Left ventricle myocardium inferior (tissue), 1 donor: ENCODE measurements at regions of chr9 and their contacts with region 1.

Region 1: GRCh38 chr9:11805969-11806368 is 887.2 kb upstream of the TYRP1 start:
- DNase-seq: no peak
- H3K4me3 ChIP-seq: no peak overlapping the region
- H3K27ac ChIP-seq: no peak overlapping the region
- H3K4me1 ChIP-seq: no peaks in the 10 kb centered on the region
- H3K27me3 ChIP-seq: no peaks in the 10 kb centered on the region
- CTCF ChIP-seq: no peak

Region 2: GRCh38 chr9:11709567-11709966 is 96.4 kb before region 1 on chr9:
- intact Hi-C with region 1: no loop called
- DNase-seq: no peak
- H3K4me3 ChIP-seq: no peak overlapping the region
- H3K27ac ChIP-seq: no peak overlapping the region
- H3K4me1 ChIP-seq: no peaks in the 10 kb centered on the region
- H3K27me3 ChIP-seq: no peaks in the 10 kb centered on the region
- CTCF ChIP-seq: no peak

Region 3: DNA sequence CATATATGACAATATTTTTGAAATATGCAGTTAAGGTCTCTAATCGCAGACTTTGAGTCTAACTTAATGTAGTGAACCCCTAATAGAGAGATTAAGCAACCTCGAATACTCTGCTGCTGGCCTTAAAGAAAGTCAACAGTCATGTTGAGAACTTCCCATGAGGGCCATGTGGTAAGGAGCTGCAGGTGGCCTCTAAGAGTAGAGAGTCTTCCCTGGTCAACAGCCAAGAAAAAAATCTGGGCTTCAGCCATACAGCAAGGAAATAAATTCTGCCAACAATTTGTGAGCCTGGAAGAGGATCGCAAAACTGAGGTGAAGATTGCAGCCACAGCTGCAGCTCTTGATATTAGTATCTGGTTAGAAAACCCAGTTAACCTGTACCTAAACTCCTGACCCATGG is 48.0 kb before region 1 on chr9:
- intact Hi-C with region 1: no loop called
- DNase-seq: no peak
- H3K4me3 ChIP-seq: no peak overlapping the region
- H3K27ac ChIP-seq: no peak overlapping the region
- H3K4me1 ChIP-seq: no peaks in the 10 kb centered on the region
- H3K27me3 ChIP-seq: no peaks in the 10 kb centered on the region
- CTCF ChIP-seq: no peak

Region 4: DNA sequence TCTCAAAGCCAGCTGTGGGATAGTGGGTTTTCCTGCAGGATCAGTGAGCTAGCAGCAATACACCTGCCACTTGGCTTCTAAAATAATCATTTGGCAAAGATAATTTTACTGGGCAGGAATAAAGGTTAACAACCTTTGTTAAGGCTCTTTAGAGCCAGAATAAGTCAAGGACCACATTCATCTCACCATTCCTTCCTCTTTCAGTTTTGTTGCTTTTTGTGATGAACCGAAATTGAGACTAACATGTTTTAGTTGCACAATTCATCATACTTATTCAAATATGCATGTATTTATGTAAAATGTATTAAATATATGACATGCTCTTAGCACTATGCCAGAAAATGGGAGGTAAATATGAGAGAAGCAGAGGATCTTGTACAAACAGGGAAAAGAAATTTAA is 62.8 kb after region 1 on chr9:
- intact Hi-C with region 1: loop called (anchors 10 kb)
- DNase-seq: no peak
- H3K4me3 ChIP-seq: no peak overlapping the region
- H3K27ac ChIP-seq: no peak overlapping the region
- H3K4me1 ChIP-seq: no peaks in the 10 kb centered on the region
- H3K27me3 ChIP-seq: no peaks in the 10 kb centered on the region
- CTCF ChIP-seq: no peak

Region 5: GRCh38 chr9:11893331-11893730 is 87.4 kb after region 1 on chr9:
- intact Hi-C with region 1: no loop called
- DNase-seq: no peak
- H3K4me3 ChIP-seq: no peak overlapping the region
- H3K27ac ChIP-seq: no peak overlapping the region
- H3K4me1 ChIP-seq: no peaks in the 10 kb centered on the region
- H3K27me3 ChIP-seq: no peaks in the 10 kb centered on the region
- CTCF ChIP-seq: no peak

Region 6: GRCh38 chr9:11992866-11993265 is 186.9 kb after region 1 on chr9:
- intact Hi-C with region 1: no loop called
- DNase-seq: no peak
- H3K4me3 ChIP-seq: no peak overlapping the region
- H3K27ac ChIP-seq: no peak overlapping the region
- H3K4me1 ChIP-seq: no peaks in the 10 kb centered on the region
- H3K27me3 ChIP-seq: no peaks in the 10 kb centered on the region
- CTCF ChIP-seq: no peak